Head of caudate nucleus (tissue), 42 donors: ENCODE measurements at regions of chr18 and their contacts with region 1.

Region 1: GRCh38 chr18:48445540-48445939 is 36.4 kb upstream of the ZBTB7C start:
- DNase-seq: peak in 41 of 42 donors; percentile 43 to 87 (median 68)

Region 2: GRCh38 chr18:48030616-48031480 is 414.7 kb before region 1 on chr18:
- intact Hi-C with region 1: loop called (anchors 5 kb)
- DNase-seq: peak in 36 of 42 donors; percentile 23 to 79 (median 57)